PC-3 (cell line): ENCODE measurements at regions of chr3 and their contacts with region 1.

Region 1: GRCh38 chr3:167978031-167978430 is 117.7 kb downstream of the GOLIM4 start:
- DNase-seq: peak; percentile 61
- ATAC-seq: peak; percentile 95
- H3K4me3 ChIP-seq: no peak overlapping the region
- H3K27ac ChIP-seq: no peak overlapping the region
- H3K4me1 ChIP-seq: peaks cover 7% of the 10 kb centered on the region; the same call in 1 of the 2 replicates
- H3K27me3 ChIP-seq: no peaks in the 10 kb centered on the region; the same call in 1 of the 2 replicates
- CTCF ChIP-seq: no peak

Region 2: DNA sequence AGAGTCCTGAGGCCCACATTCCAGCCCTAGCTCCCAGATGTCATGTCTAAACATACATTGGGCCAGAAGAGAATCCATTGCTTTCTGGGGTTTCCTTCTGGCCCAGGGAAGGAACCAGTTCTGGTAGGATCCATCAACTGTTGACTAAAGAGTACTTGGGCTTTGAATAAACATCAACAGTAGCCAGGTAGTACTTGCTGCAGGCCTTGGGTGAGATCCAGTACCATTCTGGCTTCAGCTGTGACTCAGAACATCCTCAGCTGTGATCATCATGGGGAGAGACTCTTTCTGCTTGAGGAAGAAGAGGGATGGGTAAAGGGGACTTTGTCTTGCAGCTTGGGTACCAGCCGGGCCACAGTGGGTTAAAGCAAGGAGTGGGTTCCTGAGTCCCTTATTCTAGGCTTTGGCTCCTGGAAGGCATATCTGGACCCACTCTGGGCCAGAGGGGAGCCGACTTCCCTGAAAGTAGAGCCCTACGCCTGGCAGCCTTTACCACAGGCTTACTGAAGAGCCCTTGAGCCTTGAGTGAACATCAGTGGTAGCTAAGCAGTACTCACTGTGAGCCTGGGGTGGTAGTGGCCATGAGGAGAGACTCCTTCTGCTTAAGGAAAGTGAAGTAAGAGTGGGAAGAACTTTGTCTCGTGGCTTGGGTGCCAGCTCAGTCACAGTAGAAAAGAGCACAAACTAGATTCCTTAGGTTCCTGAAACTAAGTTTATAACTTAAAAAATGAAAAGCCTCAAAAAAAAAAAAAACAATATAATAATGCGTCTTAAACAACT is 10.6 kb before region 1 on chr3:
- CTCF ChIA-PET with region 1: no interaction called
- POLR2A ChIA-PET with region 1: interaction called, 11 read pairs
- intact Hi-C with region 1: no loop called
- DNase-seq: peak; percentile 8
- ATAC-seq: no peak
- H3K4me3 ChIP-seq: no peak overlapping the region
- H3K27ac ChIP-seq: no peak overlapping the region
- H3K4me1 ChIP-seq: no peaks in the 10 kb centered on the region
- H3K27me3 ChIP-seq: no peaks in the 10 kb centered on the region
- CTCF ChIP-seq: no peak